Panc1 (cell line): ENCODE measurements at regions of chr3 and their contacts with region 1.

Region 1: DNA sequence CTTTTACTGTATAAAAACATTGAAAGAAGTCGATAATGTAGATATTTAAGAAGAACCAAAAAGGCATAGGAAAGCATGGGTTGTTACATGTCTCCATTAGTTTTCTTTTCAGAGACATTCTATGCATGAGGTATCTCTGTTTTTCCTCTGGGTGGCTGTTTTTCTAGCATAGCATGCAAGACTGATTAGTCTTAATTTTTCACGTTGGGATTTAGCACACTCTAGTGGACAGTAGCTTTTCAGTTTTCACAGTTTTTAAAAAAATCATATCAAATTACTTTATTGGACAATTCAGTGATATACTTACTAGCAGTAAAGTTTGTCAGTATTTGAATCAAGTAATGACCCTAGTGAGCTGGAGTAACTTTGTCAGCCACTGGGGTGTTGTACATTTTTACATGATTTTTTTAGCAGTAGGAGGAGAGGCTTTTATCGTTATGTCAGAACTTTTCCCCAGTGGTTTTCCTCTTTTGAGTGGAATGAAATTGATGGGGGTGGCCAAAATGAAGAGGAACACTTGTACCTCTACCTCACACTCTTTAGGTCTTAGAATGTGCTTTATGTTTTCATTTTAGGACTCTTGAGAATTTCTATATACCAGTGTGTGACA is 57.2 kb downstream of the SEC22A start:
- DNase-seq: peak; percentile 24
- ATAC-seq: peak; percentile 89
- H3K4me3 ChIP-seq: no peak overlapping the region
- H3K27ac ChIP-seq: no peak overlapping the region
- H3K4me1 ChIP-seq: no peaks in the 10 kb centered on the region
- H3K27me3 ChIP-seq: no peaks in the 10 kb centered on the region
- CTCF ChIP-seq: peak; percentile 72; the same call in 1 of the 2 replicates

Region 2: DNA sequence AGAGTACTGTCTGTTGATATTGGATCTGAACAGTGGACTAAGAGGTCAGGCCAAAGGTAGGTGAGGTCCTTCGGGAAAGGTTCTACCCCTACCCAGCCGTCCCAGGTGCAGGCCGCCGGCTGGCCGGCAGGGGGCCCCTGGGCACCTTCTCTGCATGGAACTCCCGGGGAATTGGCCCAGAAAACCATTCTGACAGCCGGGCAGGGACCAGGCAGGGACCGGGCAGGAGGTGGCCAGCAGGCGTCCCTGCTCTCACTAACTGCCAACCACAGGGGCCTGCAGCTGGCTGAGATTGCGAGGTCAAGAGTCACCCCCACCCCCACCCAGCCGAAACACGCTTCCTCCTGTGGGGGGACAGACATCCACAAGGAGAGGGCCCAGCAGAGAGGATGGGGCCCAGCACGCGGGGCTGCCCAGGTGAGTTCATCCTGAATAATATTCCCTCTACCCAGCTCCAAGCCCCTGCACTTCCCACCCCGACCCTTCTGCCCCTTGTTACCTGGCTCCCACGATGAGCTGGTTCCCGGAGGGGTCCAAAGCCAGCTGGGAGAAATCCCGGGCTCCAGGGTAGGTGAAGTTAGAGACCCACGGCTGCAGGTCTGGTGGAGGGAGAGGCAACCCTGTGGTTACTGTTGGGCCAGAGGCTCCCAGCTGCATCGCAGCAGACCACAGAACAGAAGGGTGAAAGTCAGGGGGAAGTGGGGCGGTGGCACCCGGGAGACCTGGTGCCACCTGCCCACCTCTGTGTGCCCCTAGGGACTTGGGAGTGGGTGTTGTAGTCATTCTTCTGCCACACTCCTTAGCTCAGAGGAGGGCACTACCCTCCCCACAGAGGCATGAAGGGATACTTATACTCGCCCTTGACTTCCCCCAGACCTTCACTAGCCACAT is 315.7 kb before region 1 on chr3:
- CTCF ChIA-PET with region 1: interaction called, 6 read pairs
- POLR2A ChIA-PET with region 1: no interaction called
- in situ Hi-C with region 1: no loop called
- intact Hi-C with region 1: loop called (anchors 5 kb)
- DNase-seq: peak; percentile 13
- ATAC-seq: peak; percentile 97
- H3K4me3 ChIP-seq: no peak overlapping the region
- H3K27ac ChIP-seq: no peak overlapping the region
- H3K4me1 ChIP-seq: no peaks in the 10 kb centered on the region
- H3K27me3 ChIP-seq: no peaks in the 10 kb centered on the region
- CTCF ChIP-seq: peak; percentile 99